Activated naive CD4-positive, alpha-beta T cell treated with anti-CD3 and anti-CD28 coated beads for 36 hours (primary cell): ENCODE measurements at regions of chr2 and their contacts with region 1.

Region 1: GRCh38 chr2:71068218-71069035 is at the start of gene NAGK:
- DNase-seq: peak; percentile 96
- H3K4me3 Mint-ChIP-seq: peak within 1 kb of the TSS; percentile 95
- H3K27ac Mint-ChIP-seq: peak within 1 kb of the TSS; percentile 98
- H3K4me1 Mint-ChIP-seq: peaks cover 49% of the 10 kb centered on the region
- H3K27me3 Mint-ChIP-seq: no peaks in the 10 kb centered on the region
- total RNA-seq, gene NAGK: 33.2 to 38.3 TPM

Region 2: DNA sequence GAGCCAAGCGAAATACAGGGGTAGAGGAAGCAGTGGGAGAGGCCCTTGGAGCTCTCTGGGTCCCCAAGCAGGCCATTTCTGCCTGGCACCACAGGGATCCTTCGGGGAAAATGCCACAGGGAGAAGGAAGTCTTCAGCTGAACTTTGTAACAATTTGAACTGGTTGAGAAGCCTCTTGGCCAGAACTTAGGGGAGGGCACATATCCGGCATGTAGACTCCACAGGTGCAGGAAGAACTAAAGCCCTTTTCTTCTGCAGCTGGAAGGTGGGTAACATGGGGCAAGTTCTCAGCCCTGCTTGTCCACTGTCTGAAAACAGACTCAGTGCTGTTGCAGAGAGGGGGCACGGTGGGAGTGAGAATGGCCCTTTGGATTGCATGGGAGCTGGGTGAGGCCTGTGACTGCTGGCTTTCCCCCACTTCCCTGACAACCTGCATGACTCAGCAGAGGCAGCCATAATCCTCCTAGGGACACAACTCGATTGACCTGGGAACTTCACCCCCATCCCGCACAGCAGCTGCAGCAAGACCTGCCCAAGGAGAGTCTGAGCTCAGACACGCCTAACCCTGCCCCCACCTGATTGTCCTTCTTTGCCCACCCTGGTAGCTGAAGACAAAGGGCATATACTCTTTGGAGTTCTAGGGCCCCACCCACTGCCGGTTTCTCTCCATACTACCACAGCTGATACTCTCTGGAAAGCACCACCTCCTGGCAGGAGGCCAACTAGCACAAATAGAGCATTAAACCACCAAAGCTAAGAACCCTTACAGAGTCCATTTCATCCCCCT is 665.0 kb before region 1 on chr2:
- CTCF ChIA-PET with region 1: no interaction called
- intact Hi-C with region 1: no loop called
- DNase-seq: no peak
- H3K4me3 Mint-ChIP-seq: no peak overlapping the region
- H3K27ac Mint-ChIP-seq: no peak overlapping the region
- H3K4me1 Mint-ChIP-seq: no peaks in the 10 kb centered on the region
- H3K27me3 Mint-ChIP-seq: no peaks in the 10 kb centered on the region

Region 3: DNA sequence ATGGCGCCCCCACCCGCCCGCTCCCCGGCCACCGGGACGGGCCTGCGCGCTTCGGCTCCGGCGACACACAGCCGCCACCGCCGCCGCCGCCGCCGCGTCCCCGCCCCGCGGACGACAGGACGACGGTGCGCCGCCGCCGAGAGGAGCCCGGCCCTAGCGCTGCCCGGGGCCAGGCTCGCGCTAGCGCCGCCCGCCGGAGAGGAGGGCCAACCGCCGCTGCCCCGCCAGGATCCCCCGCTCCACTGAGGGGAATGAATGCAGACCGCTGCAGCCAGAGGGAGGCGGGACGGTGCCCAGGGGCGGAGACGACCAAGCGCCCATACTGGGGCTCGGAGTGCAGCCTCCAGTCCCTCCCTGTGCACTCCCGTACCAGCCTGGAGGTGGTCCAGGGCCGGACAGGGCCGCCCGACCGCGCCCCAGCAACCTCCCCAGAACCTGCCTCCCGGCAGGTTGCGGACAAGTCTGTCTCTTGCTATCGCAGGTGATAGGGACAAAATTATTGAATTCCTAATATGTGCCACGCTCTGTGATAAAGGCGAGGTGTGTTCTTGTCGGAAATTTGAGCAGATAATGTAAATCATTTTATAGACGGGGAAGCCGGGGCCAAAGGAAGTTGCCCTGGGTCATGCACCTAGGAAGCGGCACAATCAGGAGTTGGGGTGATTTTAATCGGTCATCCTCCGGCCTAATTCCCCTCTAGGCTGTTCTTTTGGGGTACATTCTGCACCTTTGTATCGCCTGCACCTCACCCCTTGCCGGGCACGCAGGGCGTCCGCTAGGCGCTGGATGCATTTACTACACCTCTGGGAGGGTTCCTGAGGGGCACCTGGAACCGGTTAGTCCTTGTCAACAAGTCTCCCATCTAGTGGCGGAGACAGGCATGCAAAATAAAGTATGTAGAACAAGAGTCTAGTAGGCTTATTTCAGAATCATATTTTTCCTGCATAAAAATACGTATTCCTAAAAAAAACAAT is 73.4 kb before region 1 on chr2 and contains the start of gene TEX261:
- CTCF ChIA-PET with region 1: interaction called, 4 read pairs
- intact Hi-C with region 1: loop called (anchors 1 kb)
- DNase-seq: peak; percentile 91
- H3K4me3 Mint-ChIP-seq: peak within 1 kb of the TSS; percentile 94
- H3K27ac Mint-ChIP-seq: peak within 1 kb of the TSS; percentile 89
- H3K4me1 Mint-ChIP-seq: peaks cover 33% of the 10 kb centered on the region
- H3K27me3 Mint-ChIP-seq: no peaks in the 10 kb centered on the region
- total RNA-seq, gene TEX261: 17.8 to 18.7 TPM

Region 4: DNA sequence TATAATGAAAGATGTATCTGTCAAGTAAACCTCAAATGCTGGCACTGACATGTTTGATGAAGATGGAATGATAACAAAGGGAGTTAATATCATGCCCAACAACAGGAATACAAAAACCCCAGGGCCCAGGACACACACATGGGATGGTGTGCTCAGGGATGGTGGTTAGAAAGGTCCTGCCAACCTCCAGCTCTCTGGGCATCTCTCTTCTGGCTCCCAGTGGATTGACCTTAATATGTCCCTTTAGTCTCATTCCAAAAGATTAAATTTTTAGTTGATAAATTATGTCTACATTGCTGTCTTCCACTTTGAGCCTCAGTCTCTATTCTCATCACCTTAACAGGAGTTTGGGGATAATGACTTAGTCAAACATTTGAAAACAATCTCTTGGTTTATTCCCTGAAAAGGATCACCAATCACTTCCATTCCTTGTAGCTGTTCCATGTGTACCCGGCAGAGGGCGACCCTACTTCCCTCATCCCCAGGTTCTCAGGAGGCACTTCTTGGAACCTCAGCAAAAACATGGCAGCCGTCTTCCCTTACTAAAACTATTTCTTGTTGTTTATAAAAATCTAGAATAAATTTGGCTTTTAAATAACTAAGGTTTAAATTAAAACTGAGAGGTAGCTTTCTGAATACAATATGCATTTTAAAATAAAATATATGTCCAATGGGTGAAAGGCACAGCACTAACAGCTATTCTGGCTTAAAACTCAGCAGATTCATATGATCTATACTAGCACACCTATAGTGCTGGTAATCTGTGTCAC is 32.0 kb after region 1 on chr2:
- CTCF ChIA-PET with region 1: interaction called, 30 read pairs
- intact Hi-C with region 1: loop called (anchors 2 kb)
- DNase-seq: peak; percentile 75
- H3K4me3 Mint-ChIP-seq: no peak overlapping the region
- H3K27ac Mint-ChIP-seq: no peak overlapping the region
- H3K4me1 Mint-ChIP-seq: peaks cover 3% of the 10 kb centered on the region
- H3K27me3 Mint-ChIP-seq: peaks cover 3% of the 10 kb centered on the region

Region 5: GRCh38 chr2:71130113-71130904 is 61.9 kb after region 1 on chr2 and contains the starts of genes MCEE and MPHOSPH10:
- CTCF ChIA-PET with region 1: interaction called, 13 read pairs
- intact Hi-C with region 1: loop called (anchors 1 kb)
- DNase-seq: peak; percentile 94
- H3K4me3 Mint-ChIP-seq: no peak within 1 kb of the TSS
- H3K27ac Mint-ChIP-seq: no peak within 1 kb of the TSS
- H3K4me1 Mint-ChIP-seq: peaks cover 16% of the 10 kb centered on the region
- H3K27me3 Mint-ChIP-seq: no peaks in the 10 kb centered on the region
- total RNA-seq, gene MCEE: 14.0 to 15.8 TPM
- total RNA-seq, gene MPHOSPH10: 27.0 to 32.3 TPM